CD8-positive, alpha-beta T cell (primary cell): ENCODE measurements at regions of chr10 and their contacts with region 1.

Region 1: GRCh38 chr10:114304017-114304570 is 65.0 kb downstream of the VWA2 start:
- DNase-seq: peak; percentile 31 to 80 (median 67)
- ATAC-seq: peak; percentile 36
- H3K4me3 ChIP-seq: peak overlapping the region; percentile 59 to 69
- H3K4me3 Mint-ChIP-seq: peak overlapping the region; percentile 89
- H3K27ac ChIP-seq: peak overlapping the region; percentile 7 to 37
- H3K27ac Mint-ChIP-seq: peak overlapping the region; percentile 70
- H3K4me1 ChIP-seq: peaks cover 4% of the 10 kb centered on the region
- H3K4me1 Mint-ChIP-seq: peaks cover 10% of the 10 kb centered on the region
- H3K27me3 ChIP-seq: no peaks in the 10 kb centered on the region
- H3K27me3 Mint-ChIP-seq: no peaks in the 10 kb centered on the region
- CTCF ChIP-seq: peak; percentile 50

Region 2: DNA sequence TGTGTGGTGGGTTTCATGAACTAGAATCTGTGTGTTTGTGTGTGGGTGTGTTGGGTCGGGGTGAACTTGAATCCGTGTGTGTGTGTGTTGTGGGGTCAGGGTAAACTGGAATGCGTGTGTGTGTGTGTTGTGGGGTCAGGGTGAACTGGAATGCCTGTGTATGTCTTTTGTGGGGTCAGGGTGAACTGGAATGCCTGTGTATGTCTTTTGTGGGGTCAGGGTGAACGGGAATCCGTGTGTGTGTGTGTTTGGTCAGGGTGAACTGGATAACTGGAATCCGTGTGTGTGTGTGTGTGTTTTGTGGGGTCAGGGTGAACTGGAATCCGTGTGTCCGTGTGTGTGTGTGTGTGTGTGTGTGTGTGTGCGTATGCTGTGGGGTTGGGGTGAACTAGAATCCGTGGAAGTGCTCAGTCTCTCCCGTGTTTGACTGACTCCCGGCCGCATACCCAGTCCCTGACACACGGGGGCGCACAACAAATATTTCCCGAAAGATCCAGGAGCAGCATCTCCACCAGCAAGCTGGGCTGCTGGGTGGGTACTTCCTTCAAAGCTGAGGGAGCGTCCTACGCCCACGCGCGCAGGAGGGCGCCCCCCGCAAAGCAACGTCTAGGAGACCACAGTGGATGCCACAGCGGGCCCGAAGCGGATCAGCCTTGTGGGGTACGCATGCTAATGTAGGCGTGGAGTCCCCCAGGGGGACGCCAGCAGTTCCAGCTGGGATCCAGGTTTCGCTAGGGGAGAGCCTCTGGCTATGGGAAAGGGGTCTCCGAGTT is 625.2 kb before region 1 on chr10:
- CTCF ChIA-PET with region 1: no interaction called
- POLR2A ChIA-PET with region 1: no interaction called
- intact Hi-C with region 1: loop called in 1 of 2 experiments (anchors 5 kb)
- DNase-seq: peak; percentile 39 to 78 (median 69)
- ATAC-seq: peak; percentile 30
- H3K4me3 ChIP-seq: peak overlapping the region; percentile 94 to 95
- H3K4me3 Mint-ChIP-seq: peak overlapping the region; percentile 96
- H3K27ac ChIP-seq: peak overlapping the region; percentile 84 to 88
- H3K27ac Mint-ChIP-seq: peak overlapping the region; percentile 62
- H3K4me1 ChIP-seq: peaks cover 24% of the 10 kb centered on the region
- H3K4me1 Mint-ChIP-seq: peaks cover 41% of the 10 kb centered on the region
- H3K27me3 ChIP-seq: no peaks in the 10 kb centered on the region
- H3K27me3 Mint-ChIP-seq: peaks cover 3% of the 10 kb centered on the region
- CTCF ChIP-seq: peak; percentile 46

Region 3: DNA sequence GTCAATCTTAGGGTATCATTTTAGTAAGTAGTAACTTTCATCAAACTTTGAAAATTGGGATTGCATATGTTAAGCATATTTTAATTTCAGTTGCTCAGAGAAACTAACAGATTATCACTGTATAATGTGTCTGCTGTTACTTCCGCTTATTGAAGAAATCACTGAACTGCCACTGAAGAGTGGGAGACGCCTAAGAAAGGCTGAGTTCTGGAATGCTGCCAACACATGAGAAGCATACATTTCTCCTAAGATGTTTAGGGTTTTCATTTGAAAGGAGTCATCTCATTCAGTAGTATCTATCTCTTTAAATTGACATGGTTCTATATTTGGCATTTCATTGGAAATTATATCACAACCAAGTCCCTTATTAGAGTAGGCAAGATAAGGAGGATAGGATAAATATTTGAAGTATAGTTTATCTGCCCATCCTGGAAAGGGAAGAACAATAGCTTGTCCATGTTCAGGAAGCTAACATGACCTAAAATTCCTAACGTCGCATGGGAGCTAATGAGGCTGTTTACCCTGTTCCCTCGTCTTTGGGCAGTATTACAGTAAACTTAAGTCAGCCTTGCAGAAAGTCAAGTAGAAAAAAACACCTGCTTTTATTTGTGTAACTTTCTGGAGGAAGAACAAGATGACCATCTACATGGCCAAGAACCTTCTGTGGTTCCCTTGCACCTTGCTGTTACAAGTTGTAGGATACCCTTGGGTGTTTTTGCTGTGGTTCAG is 382.4 kb before region 1 on chr10:
- CTCF ChIA-PET with region 1: no interaction called
- POLR2A ChIA-PET with region 1: no interaction called
- intact Hi-C with region 1: no loop called
- DNase-seq: no peak
- ATAC-seq: no peak
- H3K4me3 ChIP-seq: no peak overlapping the region
- H3K4me3 Mint-ChIP-seq: no peak overlapping the region
- H3K27ac ChIP-seq: no peak overlapping the region
- H3K27ac Mint-ChIP-seq: no peak overlapping the region
- H3K4me1 ChIP-seq: no peaks in the 10 kb centered on the region
- H3K4me1 Mint-ChIP-seq: no peaks in the 10 kb centered on the region
- H3K27me3 ChIP-seq: no peaks in the 10 kb centered on the region
- H3K27me3 Mint-ChIP-seq: peaks cover 10% of the 10 kb centered on the region
- CTCF ChIP-seq: no peak

Region 4: GRCh38 chr10:114173921-114174694 is 130.0 kb before region 1 on chr10 and contains the start of gene CCDC186:
- CTCF ChIA-PET with region 1: interaction called, 6 read pairs
- POLR2A ChIA-PET with region 1: no interaction called
- intact Hi-C with region 1: loop called (anchors 2 to 10 kb)
- DNase-seq: peak; percentile 97 to 99 (median 98)
- ATAC-seq: peak; percentile 97
- H3K4me3 ChIP-seq: peak within 1 kb of the TSS; percentile 73 to 97
- H3K4me3 Mint-ChIP-seq: peak within 1 kb of the TSS; percentile 94
- H3K27ac ChIP-seq: peak within 1 kb of the TSS; percentile 82 to 92
- H3K27ac Mint-ChIP-seq: peak within 1 kb of the TSS; percentile 98
- H3K4me1 ChIP-seq: peaks cover 11% of the 10 kb centered on the region
- H3K4me1 Mint-ChIP-seq: peaks cover 48% of the 10 kb centered on the region
- H3K27me3 ChIP-seq: no peaks in the 10 kb centered on the region
- H3K27me3 Mint-ChIP-seq: peaks cover 2% of the 10 kb centered on the region
- CTCF ChIP-seq: no peak
- total RNA-seq, gene CCDC186: 57.9 to 67.7 TPM

Region 5: GRCh38 chr10:114327537-114328440 is 23.7 kb after region 1 on chr10:
- CTCF ChIA-PET with region 1: interaction called, 10 read pairs
- POLR2A ChIA-PET with region 1: no interaction called
- intact Hi-C with region 1: no loop called
- DNase-seq: no peak
- ATAC-seq: no peak
- H3K4me3 ChIP-seq: no peak overlapping the region
- H3K4me3 Mint-ChIP-seq: no peak overlapping the region
- H3K27ac ChIP-seq: no peak overlapping the region
- H3K27ac Mint-ChIP-seq: no peak overlapping the region
- H3K4me1 ChIP-seq: no peaks in the 10 kb centered on the region
- H3K4me1 Mint-ChIP-seq: no peaks in the 10 kb centered on the region
- H3K27me3 ChIP-seq: no peaks in the 10 kb centered on the region
- H3K27me3 Mint-ChIP-seq: no peaks in the 10 kb centered on the region
- CTCF ChIP-seq: no peak

Region 6: GRCh38 chr10:114501650-114502049 is 197.6 kb after region 1 on chr10:
- CTCF ChIA-PET with region 1: no interaction called
- POLR2A ChIA-PET with region 1: no interaction called
- intact Hi-C with region 1: no loop called
- DNase-seq: no peak
- ATAC-seq: no peak
- H3K4me3 ChIP-seq: no peak overlapping the region
- H3K4me3 Mint-ChIP-seq: no peak overlapping the region
- H3K27ac ChIP-seq: no peak overlapping the region
- H3K27ac Mint-ChIP-seq: peak overlapping the region; percentile 78
- H3K4me1 ChIP-seq: peaks cover 96% of the 10 kb centered on the region
- H3K4me1 Mint-ChIP-seq: peaks cover 93% of the 10 kb centered on the region
- H3K27me3 ChIP-seq: no peaks in the 10 kb centered on the region
- H3K27me3 Mint-ChIP-seq: no peaks in the 10 kb centered on the region
- CTCF ChIP-seq: no peak

Region 7: DNA sequence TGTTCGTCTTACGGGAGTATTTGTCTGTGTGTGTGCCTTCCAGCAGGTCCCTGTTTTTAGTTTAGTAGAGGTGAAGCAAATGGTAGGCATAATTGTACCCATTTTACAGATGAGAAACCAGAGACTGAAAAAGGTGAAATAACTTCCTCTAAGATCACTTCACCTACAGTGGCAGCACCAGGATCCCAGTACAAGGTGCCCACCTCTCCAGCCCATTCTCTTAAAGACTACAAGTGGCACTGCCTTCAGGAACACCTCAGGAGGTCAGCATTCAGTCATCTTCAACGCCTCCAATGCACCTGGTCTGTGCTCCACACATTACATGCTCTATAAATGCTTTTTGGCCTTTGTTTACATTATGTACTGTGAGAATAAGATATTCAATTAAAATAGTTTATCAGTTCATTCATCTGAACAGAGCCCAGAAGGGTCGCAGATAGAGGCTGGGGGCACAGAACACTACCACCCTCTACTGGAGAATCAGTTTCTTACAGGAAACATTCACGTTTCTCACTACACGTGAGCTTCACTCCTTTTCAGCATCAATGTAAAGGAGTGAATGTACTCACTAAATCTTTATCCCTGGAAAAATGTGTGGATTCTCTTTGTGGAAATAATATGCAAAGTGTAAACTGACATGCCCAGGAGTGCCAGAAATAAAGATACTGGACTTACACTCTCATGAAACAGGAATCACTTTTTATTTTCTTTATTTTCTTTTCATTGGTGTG is 399.4 kb after region 1 on chr10:
- CTCF ChIA-PET with region 1: interaction called, 15 read pairs
- POLR2A ChIA-PET with region 1: no interaction called
- intact Hi-C with region 1: loop called in 1 of 2 experiments (anchors 2 kb)
- DNase-seq: peak in 4 of 9 experiments; percentile 16 to 59 (median 42)
- ATAC-seq: peak; percentile 77
- H3K4me3 ChIP-seq: no peak overlapping the region
- H3K4me3 Mint-ChIP-seq: no peak overlapping the region
- H3K27ac ChIP-seq: no peak overlapping the region
- H3K27ac Mint-ChIP-seq: no peak overlapping the region
- H3K4me1 ChIP-seq: no peaks in the 10 kb centered on the region
- H3K4me1 Mint-ChIP-seq: no peaks in the 10 kb centered on the region
- H3K27me3 ChIP-seq: no peaks in the 10 kb centered on the region
- H3K27me3 Mint-ChIP-seq: peaks cover 4% of the 10 kb centered on the region
- CTCF ChIP-seq: peak; percentile 64

Region 8: GRCh38 chr10:114821293-114821914 is 517.3 kb after region 1 on chr10 and contains the start of gene FHIP2A:
- CTCF ChIA-PET with region 1: interaction called, 8 read pairs
- POLR2A ChIA-PET with region 1: interaction called, 4 read pairs
- intact Hi-C with region 1: loop called in 1 of 2 experiments (anchors 1 kb)
- DNase-seq: peak; percentile 73 to 91 (median 82)
- ATAC-seq: peak; percentile 93
- H3K4me3 ChIP-seq: peak within 1 kb of the TSS; percentile 70 to 75
- H3K4me3 Mint-ChIP-seq: peak within 1 kb of the TSS; percentile 95
- H3K27ac ChIP-seq: peak within 1 kb of the TSS; percentile 78 to 79
- H3K27ac Mint-ChIP-seq: peak within 1 kb of the TSS; percentile 94
- H3K4me1 ChIP-seq: peaks cover 11% of the 10 kb centered on the region
- H3K4me1 Mint-ChIP-seq: peaks cover 38% of the 10 kb centered on the region
- H3K27me3 ChIP-seq: no peaks in the 10 kb centered on the region
- H3K27me3 Mint-ChIP-seq: peaks cover 2% of the 10 kb centered on the region
- CTCF ChIP-seq: peak; percentile 35
- total RNA-seq, gene FHIP2A: 62.0 to 66.4 TPM

Region 9: GRCh38 chr10:115129752-115130151 is 825.7 kb after region 1 on chr10:
- CTCF ChIA-PET with region 1: interaction called, 8 read pairs
- POLR2A ChIA-PET with region 1: no interaction called
- intact Hi-C with region 1: loop called (anchors 2 to 5 kb)
- DNase-seq: peak in 2 of 9 experiments; percentile 24 to 40
- ATAC-seq: no peak
- H3K4me3 ChIP-seq: no peak overlapping the region
- H3K4me3 Mint-ChIP-seq: no peak overlapping the region
- H3K27ac ChIP-seq: no peak overlapping the region
- H3K27ac Mint-ChIP-seq: no peak overlapping the region
- H3K4me1 ChIP-seq: no peaks in the 10 kb centered on the region
- H3K4me1 Mint-ChIP-seq: no peaks in the 10 kb centered on the region
- H3K27me3 ChIP-seq: no peaks in the 10 kb centered on the region
- H3K27me3 Mint-ChIP-seq: peaks cover 5% of the 10 kb centered on the region
- CTCF ChIP-seq: peak; percentile 25